ENCODE measurements at regions of chr5 and their contacts with region 1.

Region 1: DNA sequence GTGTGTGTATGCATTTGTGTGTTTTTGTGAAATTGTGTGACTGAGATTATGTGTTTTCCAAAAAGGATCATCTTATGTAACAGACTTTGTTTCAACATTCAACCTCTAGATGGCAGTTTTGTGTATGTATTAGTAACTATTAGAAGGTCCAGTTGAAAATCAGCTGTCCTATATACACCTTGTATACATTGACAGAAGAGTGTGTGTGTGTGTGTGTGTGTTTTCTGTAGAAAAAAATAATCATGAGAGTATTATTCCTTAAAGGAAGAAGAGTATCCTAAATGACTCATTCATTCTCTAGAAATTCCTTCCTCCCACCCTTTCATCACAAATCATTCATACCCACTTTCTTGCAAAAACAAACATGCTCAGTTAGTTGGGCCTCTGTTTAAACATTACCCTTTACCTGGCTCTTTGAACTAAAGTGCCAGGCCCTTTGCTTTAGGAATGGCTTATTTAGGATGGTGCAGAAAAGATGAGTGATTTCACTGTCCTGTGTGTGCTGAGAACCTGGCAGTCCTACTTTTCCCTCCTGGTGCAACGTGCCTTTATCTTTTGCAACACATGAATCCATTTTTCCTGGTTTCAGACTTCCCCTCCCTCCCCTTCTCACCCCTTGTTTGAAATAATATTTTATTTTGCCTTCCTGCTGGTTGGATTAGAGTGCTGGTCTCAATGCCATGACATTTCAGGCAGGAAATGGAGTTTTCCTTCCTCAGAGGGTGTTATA is 152.2 kb downstream of the ARHGAP26 start:
- DNase-seq: peak in 1 of 2 experiments; percentile 67
- H3K4me3 ChIP-seq: no peak overlapping the region
- H3K27ac ChIP-seq: no peak overlapping the region
- H3K4me1 ChIP-seq: peaks cover 11% of the 10 kb centered on the region
- H3K27me3 ChIP-seq: no peaks in the 10 kb centered on the region
- CTCF ChIP-seq: peak; percentile 70

Region 2: DNA sequence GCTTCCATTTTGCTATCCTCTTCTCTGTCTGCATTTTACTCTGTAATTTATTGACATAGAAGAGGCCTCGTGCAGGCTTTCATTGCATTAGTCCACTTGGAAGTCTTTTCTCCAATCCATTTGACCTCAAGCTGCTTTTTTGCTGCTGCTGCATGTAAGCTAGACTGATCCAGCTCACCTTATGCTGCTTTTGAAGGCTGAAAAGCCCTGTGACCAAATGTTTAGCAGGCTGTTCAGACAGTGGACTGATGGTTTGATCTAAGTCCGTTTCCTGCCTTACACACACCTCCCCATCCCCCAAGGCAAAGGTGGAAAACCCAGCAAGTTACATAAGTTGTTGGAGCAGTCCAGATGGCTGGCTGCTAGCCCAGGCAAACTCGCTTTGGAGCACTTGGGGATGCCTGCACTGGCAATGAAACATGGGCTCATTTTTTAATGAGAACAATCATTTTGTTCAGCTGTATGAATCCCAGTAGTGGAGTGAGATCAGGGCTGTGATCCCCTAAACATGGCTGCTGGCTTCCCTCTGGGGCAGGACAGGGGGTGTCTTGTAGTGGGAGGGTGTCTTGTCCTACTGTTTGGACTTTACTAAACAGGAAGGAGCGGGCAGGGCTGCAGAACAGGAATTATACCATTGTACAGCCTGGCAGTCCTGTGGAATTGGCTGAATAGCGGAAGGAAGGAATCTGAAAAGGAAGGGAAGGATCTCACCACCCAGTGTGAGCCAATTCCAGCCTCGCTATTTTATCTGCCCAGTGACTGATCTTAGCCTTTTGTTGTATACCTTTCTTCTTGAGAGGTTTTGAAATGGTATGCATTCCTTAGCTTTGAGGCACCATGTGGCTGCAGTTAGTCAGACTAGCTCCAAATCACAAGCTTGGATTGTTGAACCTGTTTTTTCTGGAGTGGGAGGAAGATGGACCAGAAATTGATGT is 59.8 kb after region 1 on chr5:
- CTCF ChIA-PET with region 1: no interaction called
- POLR2A ChIA-PET with region 1: no interaction called
- intact Hi-C with region 1: loop called (anchors 2 kb)
- DNase-seq: peak; percentile 69 to 96
- H3K4me3 ChIP-seq: peak overlapping the region; percentile 29; the same call in 1 of the 2 replicates
- H3K27ac ChIP-seq: peak overlapping the region; percentile 90
- H3K4me1 ChIP-seq: peaks cover 33% of the 10 kb centered on the region
- H3K27me3 ChIP-seq: no peaks in the 10 kb centered on the region
- CTCF ChIP-seq: no peak

Region 3: DNA sequence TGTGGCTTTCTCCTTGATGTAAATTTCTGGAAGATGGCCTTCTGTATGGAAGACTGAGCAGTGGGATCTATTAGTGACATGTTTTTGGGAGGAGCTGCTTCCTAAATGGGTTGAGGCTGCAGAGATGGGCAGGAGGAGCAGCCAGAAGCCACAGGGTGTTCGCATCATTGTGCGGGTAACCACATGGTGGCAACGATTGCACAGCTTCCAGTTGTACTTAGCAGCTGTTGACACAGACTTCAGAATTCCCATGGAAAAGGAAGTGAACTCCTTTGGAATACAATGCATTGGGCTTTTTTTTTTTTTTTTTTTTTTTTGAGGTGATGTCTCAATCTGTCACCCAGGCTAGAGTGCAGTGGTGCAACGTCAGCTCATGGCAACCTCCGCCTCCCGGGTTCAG is 183.8 kb after region 1 on chr5:
- CTCF ChIA-PET with region 1: no interaction called
- POLR2A ChIA-PET with region 1: no interaction called
- intact Hi-C with region 1: loop called (anchors 5 kb)
- DNase-seq: peak; percentile 20 to 40
- H3K4me3 ChIP-seq: no peak overlapping the region
- H3K27ac ChIP-seq: no peak overlapping the region
- H3K4me1 ChIP-seq: peaks cover 22% of the 10 kb centered on the region
- H3K27me3 ChIP-seq: no peaks in the 10 kb centered on the region
- CTCF ChIP-seq: 0 out of 2 replicates have a peak, but pooled peaks have one; percentile 20

Region 4: DNA sequence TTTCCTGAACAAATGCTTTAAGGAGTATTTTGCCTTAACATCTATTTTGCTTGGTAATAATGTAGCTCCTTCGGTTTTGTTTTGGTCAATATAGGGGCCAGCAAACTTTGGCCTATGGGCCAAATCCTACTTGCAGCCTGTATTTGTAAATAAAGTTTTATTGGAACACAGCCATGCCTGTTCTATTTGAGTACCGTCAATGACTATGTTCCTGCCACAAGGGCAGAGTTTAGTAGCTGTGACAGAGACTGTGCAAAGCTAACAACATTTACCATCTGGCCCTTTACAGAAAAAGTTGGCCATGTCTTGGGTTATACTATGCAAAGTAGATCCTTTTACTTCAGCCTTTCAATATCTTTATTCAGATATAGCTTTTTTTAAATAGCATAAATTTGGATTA is 367.7 kb after region 1 on chr5:
- CTCF ChIA-PET with region 1: no interaction called
- POLR2A ChIA-PET with region 1: no interaction called
- intact Hi-C with region 1: loop called (anchors 10 kb)
- DNase-seq: no peak
- H3K4me3 ChIP-seq: no peak overlapping the region
- H3K27ac ChIP-seq: no peak overlapping the region
- H3K4me1 ChIP-seq: no peaks in the 10 kb centered on the region
- H3K27me3 ChIP-seq: no peaks in the 10 kb centered on the region
- CTCF ChIP-seq: no peak

Region 5: DNA sequence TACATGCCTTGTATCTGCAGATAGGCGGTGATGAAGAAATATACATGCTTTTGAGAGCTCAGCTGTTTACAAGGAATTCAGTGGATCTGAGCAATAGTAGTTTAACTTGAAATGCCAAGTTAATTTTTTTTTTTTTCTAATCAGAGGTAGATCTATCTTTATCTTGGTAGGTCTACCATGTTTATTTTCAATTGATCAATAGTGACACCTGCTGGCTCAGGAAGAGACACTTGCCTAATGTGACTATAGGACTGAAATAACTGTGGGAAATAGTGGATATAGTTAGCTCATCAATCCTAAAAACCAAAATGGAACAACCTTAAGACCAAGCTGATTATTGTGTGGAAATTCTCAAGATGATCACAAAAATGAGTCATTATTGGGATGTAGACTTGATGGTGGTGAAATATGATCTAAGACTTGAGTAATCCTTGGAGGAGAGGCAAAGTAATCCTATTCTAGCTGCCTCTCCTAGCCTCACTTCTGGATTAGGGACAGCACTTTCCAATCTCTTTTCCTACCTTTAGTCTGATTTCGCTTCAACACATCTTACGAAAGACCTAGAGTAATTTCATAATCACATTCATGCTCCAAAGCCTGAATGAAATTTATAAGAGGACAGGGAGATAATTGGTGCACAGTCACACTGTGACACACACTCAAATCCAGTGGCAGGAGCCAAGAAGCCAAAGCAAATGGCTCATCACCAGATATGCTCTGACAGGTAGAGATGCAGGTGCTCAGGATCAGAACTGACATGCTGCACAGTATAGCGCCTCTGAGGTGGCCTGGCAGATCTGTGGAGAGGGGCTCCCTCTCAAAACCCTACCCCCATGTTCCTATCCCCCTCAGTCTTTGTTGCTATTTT is 1045.9 kb after region 1 on chr5:
- CTCF ChIA-PET with region 1: no interaction called
- POLR2A ChIA-PET with region 1: no interaction called
- intact Hi-C with region 1: loop called (anchors 5 kb)
- DNase-seq: peak; percentile 21 to 79
- H3K4me3 ChIP-seq: no peak overlapping the region
- H3K27ac ChIP-seq: peak overlapping the region; percentile 47; the same call in 1 of the 2 replicates
- H3K4me1 ChIP-seq: peaks cover 46% of the 10 kb centered on the region
- H3K27me3 ChIP-seq: no peaks in the 10 kb centered on the region
- CTCF ChIP-seq: peak; percentile 68

Region 6: DNA sequence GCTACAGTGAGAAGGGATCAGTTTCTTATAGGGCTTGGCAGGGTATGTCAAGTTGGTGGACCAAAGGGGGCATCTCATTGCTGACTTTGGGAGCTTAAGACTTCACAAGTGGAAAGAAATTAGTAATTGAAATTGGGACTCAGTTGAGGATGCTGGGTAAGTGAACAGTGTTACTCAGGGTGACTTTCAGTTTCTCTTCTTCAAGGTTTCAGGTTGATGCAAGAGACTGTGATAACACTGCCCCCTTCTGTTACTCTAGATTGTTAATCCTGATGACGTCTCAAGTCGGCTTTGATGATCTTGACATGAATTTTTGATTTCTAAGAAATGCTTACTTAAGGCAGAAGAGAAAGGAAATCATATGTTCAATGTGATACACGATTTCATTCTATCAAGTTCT is 1269.6 kb after region 1 on chr5:
- CTCF ChIA-PET with region 1: no interaction called
- POLR2A ChIA-PET with region 1: no interaction called
- intact Hi-C with region 1: loop called (anchors 5 kb)
- DNase-seq: peak in 1 of 2 experiments; percentile 56
- H3K4me3 ChIP-seq: peak overlapping the region; percentile 21; the same call in 1 of the 2 replicates
- H3K27ac ChIP-seq: no peak overlapping the region
- H3K4me1 ChIP-seq: peaks cover 20% of the 10 kb centered on the region
- H3K27me3 ChIP-seq: no peaks in the 10 kb centered on the region
- CTCF ChIP-seq: peak; percentile 49; the same call in 1 of the 2 replicates